Activated T-helper 2 cell treated with anti-CD3 and anti-CD28 coated beads, Interferon-gamma antibody, Interleukin-2, Interleukin-4, amounts not matched to agents 10 μg/mL and 5 μg/mL and 100 μg/mL, durations not matched to agents 14 hours and 24 hours and 36 hours (primary cell): ENCODE measurements at regions of chr7 and their contacts with region 1.

Region 1: DNA sequence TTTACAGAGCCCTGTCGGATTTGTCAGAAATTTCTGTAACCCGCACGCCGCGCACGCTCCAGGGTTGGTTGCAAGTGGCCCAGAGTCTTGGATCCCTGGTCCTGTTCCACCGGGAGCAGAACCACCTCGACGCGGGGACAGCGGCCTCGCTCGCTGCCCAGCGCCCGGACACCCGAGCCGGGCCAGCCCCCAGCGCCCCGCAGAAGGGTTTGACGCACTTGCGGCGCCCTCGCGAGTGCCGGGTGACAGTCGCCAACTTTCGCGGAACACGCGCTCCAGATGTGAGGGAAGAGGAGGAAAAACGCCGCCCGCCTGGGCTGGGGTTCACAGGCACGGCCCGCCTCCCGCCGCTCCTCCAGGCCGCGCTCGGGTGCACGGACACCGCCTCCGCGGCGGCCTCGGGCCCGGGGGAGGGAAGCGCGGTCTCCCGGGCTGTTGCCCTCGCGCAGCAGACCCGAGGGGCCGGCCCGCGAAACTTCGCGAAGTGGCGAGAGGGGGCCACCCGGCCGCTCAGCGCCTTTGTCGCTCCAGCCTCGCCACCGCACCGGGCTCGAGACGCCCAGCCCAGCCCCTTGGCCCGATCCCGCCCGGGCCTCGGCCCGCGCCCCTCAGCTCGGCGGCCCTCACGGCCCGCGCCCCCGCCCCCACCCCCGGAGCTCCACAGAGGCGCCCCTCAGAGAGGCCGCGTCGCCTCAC is 514 bp downstream of the RNF216 start:
- DNase-seq: peak; percentile 35
- H3K4me3 Mint-ChIP-seq: peak overlapping the region; percentile 83
- H3K27ac Mint-ChIP-seq: peak overlapping the region; percentile 86
- H3K4me1 Mint-ChIP-seq: peaks cover 32% of the 10 kb centered on the region
- H3K27me3 Mint-ChIP-seq: no peaks in the 10 kb centered on the region

Region 2: GRCh38 chr7:5822742-5823503 is 42.0 kb after region 1 on chr7:
- intact Hi-C with region 1: loop called (anchors 2 kb)
- DNase-seq: peak; percentile 97
- H3K4me3 Mint-ChIP-seq: peak overlapping the region; percentile 83
- H3K27ac Mint-ChIP-seq: peak overlapping the region; percentile 75
- H3K4me1 Mint-ChIP-seq: peaks cover 14% of the 10 kb centered on the region
- H3K27me3 Mint-ChIP-seq: no peaks in the 10 kb centered on the region